OCI-LY7 (cell line): ENCODE measurements at regions of chr7 and their contacts with region 1.

Region 1: DNA sequence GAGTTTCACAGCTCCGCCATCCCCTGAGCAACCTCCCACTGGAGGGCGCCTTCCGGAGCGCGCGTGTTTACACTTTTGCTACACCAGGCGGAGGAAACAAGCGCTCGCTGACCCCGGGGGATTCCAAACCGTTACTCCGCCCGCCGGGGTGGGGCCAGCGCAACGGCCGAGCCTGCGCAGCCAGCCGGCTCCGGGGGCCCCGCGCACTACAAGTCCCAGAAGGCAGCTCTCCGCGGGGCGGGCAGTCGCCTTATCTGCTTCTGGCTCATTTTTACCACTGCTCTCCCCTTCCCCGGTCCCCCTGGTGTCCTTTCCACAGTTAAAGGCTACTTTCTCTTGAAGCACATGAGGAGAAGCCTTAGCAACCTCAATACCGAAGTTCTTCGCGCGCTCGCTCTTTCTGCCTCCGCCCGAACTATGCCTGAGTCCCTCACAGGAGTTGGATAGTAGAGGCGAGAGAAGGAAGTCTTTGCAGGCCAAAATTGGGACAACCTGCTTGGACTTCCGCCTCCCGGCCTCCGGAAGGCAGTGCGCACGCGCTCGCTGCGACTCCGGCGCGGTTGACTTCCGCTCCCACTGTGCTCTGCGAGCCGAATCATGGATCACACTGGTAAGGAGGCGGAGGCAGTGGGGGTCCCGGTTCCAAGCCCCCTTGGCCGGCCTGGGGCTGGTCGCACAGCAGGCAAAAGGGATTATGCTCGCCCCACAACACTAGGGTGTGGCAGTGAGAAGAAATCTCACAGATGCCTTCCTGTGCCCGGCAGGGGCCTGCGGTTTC is at the start of gene CBLL1:
- DNase-seq: peak; percentile 97
- H3K4me3 ChIP-seq: peak within 1 kb of the TSS; percentile 90
- H3K27ac ChIP-seq: peak within 1 kb of the TSS; percentile 95
- H3K4me1 ChIP-seq: peaks cover 51% of the 10 kb centered on the region
- CTCF ChIP-seq: peak; percentile 81
- total RNA-seq, gene CBLL1: 22.9 and 25.7 TPM in 2 replicates

Region 2: GRCh38 chr7:107168233-107169119 is 575.3 kb before region 1 on chr7 and contains the start of gene HBP1:
- CTCF ChIA-PET with region 1: no interaction called
- POLR2A ChIA-PET with region 1: interaction called, 3 read pairs
- intact Hi-C with region 1: loop called (anchors 1 kb)
- DNase-seq: peak; percentile 99
- H3K4me3 ChIP-seq: peak within 1 kb of the TSS; percentile 80
- H3K27ac ChIP-seq: peak within 1 kb of the TSS; percentile 70
- H3K4me1 ChIP-seq: peaks cover 11% of the 10 kb centered on the region
- CTCF ChIP-seq: no peak
- total RNA-seq, gene HBP1: 9.3 and 10.9 TPM in 2 replicates

Region 3: DNA sequence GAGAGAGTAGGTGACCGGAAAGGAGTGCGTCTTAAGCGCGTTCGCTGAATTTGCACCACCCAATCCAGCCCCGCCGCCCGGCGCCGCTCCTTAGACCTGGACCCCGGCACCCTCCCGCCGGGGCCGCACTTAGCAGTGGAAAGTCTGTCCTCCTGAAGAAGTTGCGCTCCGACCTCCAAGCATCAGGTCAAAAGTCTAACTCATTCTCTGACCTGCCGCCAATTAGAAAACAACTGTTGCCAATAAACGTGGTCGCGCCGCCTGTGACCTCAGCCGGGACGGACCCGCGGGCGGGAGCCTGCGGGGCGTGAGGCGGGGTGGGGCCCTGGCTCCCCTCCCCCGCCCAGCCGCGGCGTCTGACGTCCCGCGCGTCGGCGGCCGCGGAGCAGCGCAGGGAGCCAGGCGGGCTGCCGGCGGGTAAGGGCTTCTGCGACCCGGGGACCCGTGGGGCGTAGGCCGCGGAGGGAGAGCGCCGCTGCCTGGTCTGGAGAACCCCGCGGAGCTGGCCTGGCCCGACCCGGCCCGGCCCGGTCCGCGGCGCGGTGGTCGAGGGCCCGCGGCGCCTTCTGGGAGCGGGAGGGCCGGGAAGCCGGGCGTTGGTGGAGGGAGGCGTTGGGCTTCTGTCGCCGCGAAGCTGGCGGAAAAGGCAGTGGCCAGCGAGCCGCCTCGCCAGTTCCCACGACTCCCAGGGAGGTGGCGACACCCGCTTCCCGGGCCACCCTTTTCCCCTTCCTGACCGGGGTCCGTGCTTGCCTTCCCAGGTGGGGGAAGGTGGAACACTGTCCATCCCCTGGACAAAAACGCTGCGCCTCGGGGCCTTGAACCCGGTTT is 163.7 kb before region 1 on chr7 and contains the start of gene BCAP29:
- CTCF ChIA-PET with region 1: no interaction called
- POLR2A ChIA-PET with region 1: interaction called, 4 read pairs
- intact Hi-C with region 1: loop called (anchors 1 kb)
- DNase-seq: peak; percentile 82
- H3K4me3 ChIP-seq: peak within 1 kb of the TSS; percentile 85
- H3K27ac ChIP-seq: peak within 1 kb of the TSS; percentile 45
- H3K4me1 ChIP-seq: peaks cover 18% of the 10 kb centered on the region
- CTCF ChIP-seq: peak; percentile 39
- total RNA-seq, gene BCAP29: 18.7 and 26.5 TPM in 2 replicates

Region 4: GRCh38 chr7:107890962-107891635 is 147.3 kb after region 1 on chr7 and contains the start of gene DLD:
- CTCF ChIA-PET with region 1: interaction called, 3 read pairs
- POLR2A ChIA-PET with region 1: interaction called, 6 read pairs
- intact Hi-C with region 1: loop called (anchors 5 kb)
- DNase-seq: peak; percentile 93
- H3K4me3 ChIP-seq: peak within 1 kb of the TSS; percentile 82
- H3K27ac ChIP-seq: peak within 1 kb of the TSS; percentile 33
- H3K4me1 ChIP-seq: peaks cover 30% of the 10 kb centered on the region
- CTCF ChIP-seq: no peak
- total RNA-seq, gene DLD: 43.8 and 48.4 TPM in 2 replicates

Region 5: DNA sequence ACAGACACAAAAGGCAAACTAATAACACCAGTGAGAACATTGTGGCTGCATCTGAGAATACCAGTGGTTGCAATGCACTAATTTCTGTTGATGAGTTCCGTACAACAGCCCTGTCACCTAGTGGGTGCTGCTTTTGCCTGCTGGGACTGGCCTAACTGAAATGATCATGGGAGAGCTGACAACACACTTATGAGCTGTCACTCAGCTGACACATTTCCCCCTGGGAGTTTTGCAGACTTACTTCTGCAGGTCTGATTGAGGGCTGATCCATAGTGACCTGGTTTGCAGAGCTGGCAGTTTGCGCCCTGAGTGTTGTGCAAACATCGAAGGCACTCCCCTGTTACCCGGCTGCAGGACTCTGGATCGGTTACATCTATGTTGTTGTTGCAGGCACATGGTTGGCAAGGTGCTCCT is 319.8 kb after region 1 on chr7:
- CTCF ChIA-PET with region 1: no interaction called
- POLR2A ChIA-PET with region 1: no interaction called
- intact Hi-C with region 1: no loop called
- DNase-seq: no peak
- H3K4me3 ChIP-seq: no peak overlapping the region
- H3K27ac ChIP-seq: no peak overlapping the region
- H3K4me1 ChIP-seq: no peaks in the 10 kb centered on the region
- CTCF ChIP-seq: no peak